GM18951 (cell line): ENCODE measurements at regions of chr16 and their contacts with region 1.

Region 1: GRCh38 chr16:8674413-8675022 is at the start of gene ABAT:
- POLR2A ChIP-seq: peak; percentile 61

Region 2: DNA sequence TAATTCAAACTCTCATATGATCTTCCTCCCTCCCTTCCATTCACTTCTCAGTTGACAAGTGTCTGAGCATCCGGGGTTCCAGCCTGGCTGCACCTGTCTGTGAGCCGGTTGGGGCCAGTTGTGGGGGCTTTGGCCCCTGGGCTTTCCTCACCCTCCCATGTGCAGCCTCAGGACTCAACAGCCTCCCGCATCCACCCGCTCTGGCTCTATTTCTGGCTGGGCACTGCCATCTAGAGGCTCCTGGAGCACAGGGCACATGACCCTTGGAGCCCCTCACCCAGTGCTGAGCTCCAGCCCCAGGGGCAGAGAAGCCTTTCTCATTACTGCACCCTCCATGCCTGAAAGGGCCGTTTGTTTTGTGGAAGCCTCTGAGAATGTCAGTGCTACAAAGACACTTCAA is 460.2 kb after region 1 on chr16:
- in situ Hi-C with region 1: loop called (anchors 25 kb)
- POLR2A ChIP-seq: no peak